ENCODE measurements at regions of chr3 and their contacts with region 1.

Region 1: GRCh38 chr3:191051037-191051436 is 148.0 kb upstream of the OSTN start:
- DNase-seq: no peak
- H3K4me3 Mint-ChIP-seq: no peak overlapping the region
- H3K27ac Mint-ChIP-seq: no peak overlapping the region
- H3K4me1 Mint-ChIP-seq: no peaks in the 10 kb centered on the region
- H3K27me3 Mint-ChIP-seq: no peaks in the 10 kb centered on the region

Region 2: GRCh38 chr3:190883973-190884832 is 166.8 kb before region 1 on chr3:
- intact Hi-C with region 1: loop called (anchors 1 kb)
- DNase-seq: no peak
- H3K4me3 Mint-ChIP-seq: no peak overlapping the region
- H3K27ac Mint-ChIP-seq: no peak overlapping the region
- H3K4me1 Mint-ChIP-seq: peaks cover 3% of the 10 kb centered on the region
- H3K27me3 Mint-ChIP-seq: no peaks in the 10 kb centered on the region

Region 3: GRCh38 chr3:191111722-191112121 is 60.7 kb after region 1 on chr3:
- intact Hi-C with region 1: no loop called
- DNase-seq: no peak
- H3K4me3 Mint-ChIP-seq: no peak overlapping the region
- H3K27ac Mint-ChIP-seq: no peak overlapping the region
- H3K4me1 Mint-ChIP-seq: no peaks in the 10 kb centered on the region
- H3K27me3 Mint-ChIP-seq: no peaks in the 10 kb centered on the region

Region 4: GRCh38 chr3:191484461-191484860 is 433.4 kb after region 1 on chr3:
- intact Hi-C with region 1: no loop called
- DNase-seq: no peak
- H3K4me3 Mint-ChIP-seq: no peak overlapping the region
- H3K27ac Mint-ChIP-seq: no peak overlapping the region
- H3K4me1 Mint-ChIP-seq: no peaks in the 10 kb centered on the region
- H3K27me3 Mint-ChIP-seq: no peaks in the 10 kb centered on the region

Measured in activated T-helper 2 cell treated with anti-CD3 and anti-CD28 coated beads, Interferon-gamma antibody, Interleukin-2, Interleukin-4, amounts not matched to agents 10 μg/mL and 5 μg/mL and 100 μg/mL, durations not matched to agents 14 hours and 24 hours and 36 hours (primary cell).